GM10248 (cell line): ENCODE measurements at regions of chr20 and their contacts with region 1.

Region 1: DNA sequence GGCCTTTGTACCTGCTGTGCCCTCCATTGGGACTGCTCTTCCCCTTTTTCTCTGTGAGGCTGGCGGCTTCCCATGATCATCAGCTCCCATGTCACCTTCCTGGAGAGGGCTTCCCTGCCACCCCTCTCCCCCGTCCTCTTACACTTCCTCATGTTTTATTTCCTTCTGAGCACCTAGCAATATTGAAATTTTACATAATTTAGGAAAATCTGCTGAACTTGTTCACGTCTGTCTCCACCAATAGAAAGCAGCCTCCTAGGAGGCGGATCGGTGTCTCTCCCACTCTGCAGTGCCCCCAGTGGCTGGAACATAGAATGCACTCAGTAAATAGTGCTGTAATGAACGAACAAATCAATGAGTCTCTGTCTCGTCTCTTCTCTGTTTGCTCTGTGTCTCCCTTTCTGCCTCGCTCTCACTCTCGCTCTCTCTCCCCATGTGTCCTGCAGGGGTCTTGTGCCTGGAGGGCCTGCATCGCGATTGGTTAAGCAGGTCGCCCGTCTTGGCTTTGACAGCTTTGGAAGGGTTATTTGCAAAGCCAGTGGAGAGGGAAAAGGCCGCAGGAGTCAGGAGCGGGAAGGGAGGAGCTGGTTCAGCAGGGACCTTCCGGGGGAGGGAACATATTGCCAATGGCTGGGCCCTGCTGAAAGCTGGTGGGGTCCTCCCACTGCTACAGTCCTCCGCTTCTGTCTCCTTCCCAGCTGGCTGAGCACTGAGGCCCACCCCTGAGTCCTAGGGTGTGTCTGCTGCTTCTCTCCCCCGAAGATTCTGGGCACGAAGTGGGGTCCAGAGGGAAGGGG is 12.1 kb upstream of the OCSTAMP start:
- DNase-seq: peak; percentile 83
- CTCF ChIP-seq: peak; percentile 73

Region 2: GRCh38 chr20:46545077-46545826 is 17.3 kb before region 1 on chr20:
- CTCF ChIA-PET with region 1: interaction called, 55 read pairs
- POLR2A ChIA-PET with region 1: no interaction called
- DNase-seq: no peak
- CTCF ChIP-seq: no peak

Region 3: DNA sequence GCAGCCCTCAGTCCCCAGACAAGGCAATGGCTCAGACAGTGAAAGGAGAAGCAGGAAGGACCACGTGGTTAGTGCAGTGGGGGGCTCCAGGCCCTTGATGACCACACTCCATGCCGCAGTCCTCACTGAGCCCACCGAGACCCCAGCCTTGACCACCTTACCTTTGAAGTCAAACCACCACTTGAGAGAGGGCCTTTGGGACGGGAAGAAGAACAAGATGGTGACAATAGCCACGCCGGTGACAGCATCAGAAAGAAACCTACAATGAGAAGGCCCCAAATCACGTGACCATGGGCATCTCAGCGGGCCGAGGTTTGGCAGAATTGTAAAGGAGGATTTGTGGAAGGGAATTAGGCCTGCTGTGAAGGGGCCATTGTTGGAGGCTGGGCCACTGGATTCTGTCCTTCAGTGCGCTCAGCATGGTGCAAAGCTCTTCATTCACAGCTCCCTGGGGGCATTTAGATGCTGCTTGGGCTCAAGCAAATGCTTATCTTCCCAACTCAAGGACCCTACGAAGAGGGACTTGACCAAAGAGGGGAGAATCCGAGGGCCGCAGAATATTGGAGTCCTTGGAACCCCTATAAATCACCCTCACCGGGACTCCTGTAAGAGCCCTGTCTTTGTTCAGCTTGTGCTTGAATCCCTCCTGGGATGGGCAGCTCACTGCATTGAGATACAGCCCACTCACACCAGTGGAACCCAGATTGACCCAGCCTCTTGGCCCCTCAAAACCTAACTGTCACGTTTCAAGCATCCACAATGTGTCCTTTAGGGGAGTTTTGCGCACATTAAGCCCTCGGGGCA is 21.0 kb after region 1 on chr20:
- CTCF ChIA-PET with region 1: interaction called, 18 read pairs
- POLR2A ChIA-PET with region 1: no interaction called
- DNase-seq: no peak
- CTCF ChIP-seq: no peak

Region 4: GRCh38 chr20:47521059-47521808 is 958.7 kb after region 1 on chr20:
- CTCF ChIA-PET with region 1: no interaction called
- POLR2A ChIA-PET with region 1: no interaction called
- DNase-seq: no peak
- CTCF ChIP-seq: no peak